CD8-positive, alpha-beta T cell (primary cell): ENCODE measurements at regions of chr10 and their contacts with region 1.

Region 1: DNA sequence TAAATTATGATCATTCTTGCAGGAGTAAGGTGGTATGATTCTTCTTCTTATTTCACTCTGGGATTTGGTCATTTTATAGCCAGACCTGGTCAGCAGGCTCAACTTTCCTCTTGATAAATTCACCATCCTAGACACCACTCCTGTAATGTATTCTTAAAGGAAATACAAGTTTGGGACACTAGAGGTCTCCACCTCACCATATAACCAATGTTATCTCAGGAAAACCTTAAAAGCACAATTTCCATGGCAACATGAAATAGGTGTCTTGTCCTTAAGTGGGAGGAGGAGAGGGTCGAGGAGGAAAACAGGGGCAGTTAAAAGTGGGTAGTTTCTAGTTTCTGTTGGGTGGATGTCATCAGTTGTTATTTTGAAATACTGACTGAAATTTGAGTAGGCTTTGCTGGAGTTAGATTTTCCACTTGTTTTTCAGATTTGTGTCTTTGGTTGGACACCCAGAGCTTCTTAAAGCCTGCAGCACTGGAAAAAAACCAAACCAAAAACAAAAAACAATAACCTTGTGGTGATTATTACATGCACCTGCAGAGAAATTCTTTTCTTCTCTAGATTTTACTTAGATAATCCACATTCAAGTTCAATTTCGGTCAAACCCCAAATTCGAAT is 163.1 kb downstream of the PRKCQ start:
- DNase-seq: peak in 2 of 9 experiments; percentile 65 to 75
- ATAC-seq: peak; percentile 72
- H3K4me3 ChIP-seq: no peak overlapping the region
- H3K4me3 Mint-ChIP-seq: no peak overlapping the region
- H3K27ac ChIP-seq: no peak overlapping the region
- H3K27ac Mint-ChIP-seq: no peak overlapping the region
- H3K4me1 ChIP-seq: no peaks in the 10 kb centered on the region
- H3K4me1 Mint-ChIP-seq: no peaks in the 10 kb centered on the region
- H3K27me3 ChIP-seq: no peaks in the 10 kb centered on the region
- H3K27me3 Mint-ChIP-seq: no peaks in the 10 kb centered on the region
- CTCF ChIP-seq: peak; percentile 74

Region 2: GRCh38 chr10:6328699-6329423 is 88.1 kb before region 1 on chr10:
- CTCF ChIA-PET with region 1: no interaction called
- POLR2A ChIA-PET with region 1: no interaction called
- intact Hi-C with region 1: no loop called
- DNase-seq: no peak
- ATAC-seq: no peak
- H3K4me3 ChIP-seq: no peak overlapping the region
- H3K4me3 Mint-ChIP-seq: no peak overlapping the region
- H3K27ac ChIP-seq: no peak overlapping the region
- H3K27ac Mint-ChIP-seq: no peak overlapping the region
- H3K4me1 ChIP-seq: no peaks in the 10 kb centered on the region
- H3K4me1 Mint-ChIP-seq: no peaks in the 10 kb centered on the region
- H3K27me3 ChIP-seq: no peaks in the 10 kb centered on the region
- H3K27me3 Mint-ChIP-seq: no peaks in the 10 kb centered on the region
- CTCF ChIP-seq: no peak

Region 3: GRCh38 chr10:6445501-6446316 is 28.7 kb after region 1 on chr10:
- CTCF ChIA-PET with region 1: interaction called, 5 read pairs
- POLR2A ChIA-PET with region 1: no interaction called
- intact Hi-C with region 1: loop called in 1 of 2 experiments (anchors 1 kb)
- DNase-seq: peak; percentile 36 to 76 (median 64)
- ATAC-seq: peak; percentile 58
- H3K4me3 ChIP-seq: no peak overlapping the region
- H3K4me3 Mint-ChIP-seq: no peak overlapping the region
- H3K27ac ChIP-seq: peak overlapping the region in 1 of 2 experiments; percentile 47
- H3K27ac Mint-ChIP-seq: peak overlapping the region; percentile 83
- H3K4me1 ChIP-seq: peaks cover 8% of the 10 kb centered on the region
- H3K4me1 Mint-ChIP-seq: peaks cover 22% of the 10 kb centered on the region
- H3K27me3 ChIP-seq: no peaks in the 10 kb centered on the region
- H3K27me3 Mint-ChIP-seq: no peaks in the 10 kb centered on the region
- CTCF ChIP-seq: peak; percentile 73

Region 4: DNA sequence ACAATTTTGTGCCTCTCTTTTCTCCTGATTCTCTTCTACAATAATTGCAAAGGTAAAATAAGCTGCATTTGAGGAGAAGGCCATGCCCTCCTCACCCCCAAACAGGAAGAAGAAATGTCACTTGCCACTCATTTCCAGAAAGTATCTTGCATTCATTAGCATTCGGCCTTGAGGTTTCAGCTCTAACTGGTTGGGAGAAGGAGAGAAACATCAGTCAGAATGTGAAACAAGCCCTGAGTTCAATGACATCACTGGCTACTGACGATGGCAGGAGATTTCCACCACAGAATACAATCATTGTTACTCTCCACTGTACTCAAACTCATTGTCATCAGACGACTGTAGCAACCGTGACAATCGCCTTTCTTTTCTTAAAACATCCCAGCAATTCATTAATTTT is 90.3 kb after region 1 on chr10:
- CTCF ChIA-PET with region 1: no interaction called
- POLR2A ChIA-PET with region 1: no interaction called
- intact Hi-C with region 1: no loop called
- DNase-seq: peak in 2 of 9 experiments; percentile 47 to 75
- ATAC-seq: peak; percentile 75
- H3K4me3 ChIP-seq: no peak overlapping the region
- H3K4me3 Mint-ChIP-seq: no peak overlapping the region
- H3K27ac ChIP-seq: peak overlapping the region; percentile 7 to 69
- H3K27ac Mint-ChIP-seq: peak overlapping the region; percentile 80
- H3K4me1 ChIP-seq: no peaks in the 10 kb centered on the region
- H3K4me1 Mint-ChIP-seq: peaks cover 37% of the 10 kb centered on the region
- H3K27me3 ChIP-seq: no peaks in the 10 kb centered on the region
- H3K27me3 Mint-ChIP-seq: no peaks in the 10 kb centered on the region
- CTCF ChIP-seq: no peak

Region 5: GRCh38 chr10:6667679-6668270 is 250.8 kb after region 1 on chr10:
- CTCF ChIA-PET with region 1: interaction called, 9 read pairs
- POLR2A ChIA-PET with region 1: interaction called, 4 read pairs
- intact Hi-C with region 1: loop called in 1 of 2 experiments (anchors 1 kb)
- DNase-seq: peak in 3 of 9 experiments; percentile 36 to 56 (median 40)
- ATAC-seq: no peak
- H3K4me3 ChIP-seq: no peak overlapping the region
- H3K4me3 Mint-ChIP-seq: no peak overlapping the region
- H3K27ac ChIP-seq: no peak overlapping the region
- H3K27ac Mint-ChIP-seq: no peak overlapping the region
- H3K4me1 ChIP-seq: peaks cover 13% of the 10 kb centered on the region
- H3K4me1 Mint-ChIP-seq: peaks cover 18% of the 10 kb centered on the region
- H3K27me3 ChIP-seq: no peaks in the 10 kb centered on the region
- H3K27me3 Mint-ChIP-seq: no peaks in the 10 kb centered on the region
- CTCF ChIP-seq: peak; percentile 44

Region 6: DNA sequence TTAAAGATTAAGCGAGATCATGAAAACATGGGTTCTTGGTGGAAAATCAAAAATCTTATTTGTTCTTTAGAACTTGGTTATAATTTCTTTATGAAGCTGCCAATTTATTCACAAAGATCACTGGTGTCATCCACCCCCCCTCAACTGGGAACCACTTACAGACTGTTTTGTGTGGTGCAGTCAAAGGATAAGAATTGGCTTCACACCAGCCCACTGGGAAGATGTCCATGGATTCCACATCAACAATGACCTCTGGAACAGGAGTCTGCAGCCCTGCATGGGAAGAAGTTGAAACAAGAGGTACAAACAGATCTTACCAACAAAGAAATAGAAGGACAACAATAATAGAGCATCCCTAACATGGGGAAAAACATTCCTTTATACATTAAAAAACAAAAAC is 788.7 kb after region 1 on chr10:
- CTCF ChIA-PET with region 1: no interaction called
- POLR2A ChIA-PET with region 1: no interaction called
- intact Hi-C with region 1: no loop called
- DNase-seq: no peak
- ATAC-seq: no peak
- H3K4me3 ChIP-seq: no peak overlapping the region
- H3K4me3 Mint-ChIP-seq: no peak overlapping the region
- H3K27ac ChIP-seq: no peak overlapping the region
- H3K27ac Mint-ChIP-seq: no peak overlapping the region
- H3K4me1 ChIP-seq: no peaks in the 10 kb centered on the region
- H3K4me1 Mint-ChIP-seq: peaks cover 2% of the 10 kb centered on the region
- H3K27me3 ChIP-seq: no peaks in the 10 kb centered on the region
- H3K27me3 Mint-ChIP-seq: no peaks in the 10 kb centered on the region
- CTCF ChIP-seq: no peak

Region 7: GRCh38 chr10:7275761-7276440 is 858.9 kb after region 1 on chr10:
- CTCF ChIA-PET with region 1: no interaction called
- POLR2A ChIA-PET with region 1: no interaction called
- intact Hi-C with region 1: loop called in 1 of 2 experiments (anchors 10 kb)
- DNase-seq: no peak
- ATAC-seq: no peak
- H3K4me3 ChIP-seq: no peak overlapping the region
- H3K4me3 Mint-ChIP-seq: no peak overlapping the region
- H3K27ac ChIP-seq: no peak overlapping the region
- H3K27ac Mint-ChIP-seq: no peak overlapping the region
- H3K4me1 ChIP-seq: peaks cover 19% of the 10 kb centered on the region
- H3K4me1 Mint-ChIP-seq: peaks cover 60% of the 10 kb centered on the region
- H3K27me3 ChIP-seq: no peaks in the 10 kb centered on the region
- H3K27me3 Mint-ChIP-seq: no peaks in the 10 kb centered on the region
- CTCF ChIP-seq: no peak